GM18951 (cell line): ENCODE measurements at regions of chr12 and their contacts with region 1.

Region 1: DNA sequence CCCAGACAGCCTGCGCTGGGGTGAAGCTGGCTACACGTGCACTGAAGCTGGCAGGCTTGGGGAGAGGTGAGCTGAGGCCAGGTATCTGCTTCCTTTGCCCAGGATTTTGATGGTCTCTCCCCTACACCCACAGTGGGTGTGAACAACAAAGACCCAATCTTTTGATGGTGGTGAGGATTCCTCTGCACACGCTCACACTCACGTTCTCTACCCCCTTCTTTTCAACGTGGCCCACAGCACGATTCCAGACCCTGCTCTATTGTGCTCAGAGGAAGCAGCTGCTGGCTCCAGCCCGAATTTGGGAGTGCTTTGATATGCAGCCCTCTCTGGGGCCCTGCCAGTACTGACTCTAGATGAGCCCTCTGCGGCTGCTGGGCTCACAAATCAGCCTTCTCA is 4.9 kb downstream of the CD9 start:
- POLR2A ChIP-seq: no peak

Region 2: DNA sequence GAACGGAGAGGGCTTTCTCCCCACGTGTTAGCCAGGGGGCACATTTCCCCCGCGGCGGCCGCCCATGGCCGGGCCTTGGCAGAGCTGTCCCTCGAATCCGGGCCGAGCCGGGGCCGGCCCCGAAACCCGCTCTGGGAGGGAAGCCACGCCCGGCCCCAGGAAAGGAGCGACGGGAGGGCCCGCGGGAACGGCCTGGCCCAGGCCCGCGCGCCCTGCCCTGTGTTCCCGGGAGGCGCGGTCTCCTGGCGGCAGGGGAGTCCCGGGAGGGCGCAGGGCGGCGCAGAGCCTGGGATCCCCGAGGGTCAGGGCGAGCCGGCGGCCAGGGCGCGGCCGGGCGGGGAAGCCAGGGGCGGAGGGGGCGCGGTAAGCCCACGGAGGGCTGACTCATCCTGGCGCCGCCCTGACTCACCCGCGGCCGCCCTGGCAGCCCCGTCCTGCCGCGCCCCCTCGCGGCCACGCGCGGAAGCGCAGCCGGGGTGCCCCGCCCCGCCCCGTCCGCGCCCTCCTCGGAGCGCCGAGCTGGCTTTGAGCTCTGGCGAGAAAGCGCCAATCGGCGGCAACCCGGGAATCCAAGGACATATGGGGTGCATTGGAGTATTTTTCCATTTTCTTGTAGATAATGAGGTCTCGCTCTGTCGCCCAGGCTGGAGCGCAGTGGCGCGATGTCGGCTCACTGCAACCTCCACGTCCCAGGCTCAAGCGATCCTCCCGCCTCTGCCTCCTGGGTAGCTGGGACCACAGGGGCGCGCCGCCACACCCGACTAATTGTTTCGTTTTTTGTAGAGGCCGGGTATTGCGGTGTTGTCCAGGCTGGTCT is 73.5 kb after region 1 on chr12:
- in situ Hi-C with region 1: loop called (anchors 5 kb)
- POLR2A ChIP-seq: peak; percentile 46

Region 3: GRCh38 chr12:6367065-6367968 is 162.2 kb after region 1 on chr12:
- in situ Hi-C with region 1: no loop called
- POLR2A ChIP-seq: no peak

Region 4: GRCh38 chr12:8026291-8026900 is 1821.3 kb after region 1 on chr12:
- in situ Hi-C with region 1: no loop called
- POLR2A ChIP-seq: no peak